ENCODE measurements at regions of chr5 and their contacts with region 1.

Region 1: DNA sequence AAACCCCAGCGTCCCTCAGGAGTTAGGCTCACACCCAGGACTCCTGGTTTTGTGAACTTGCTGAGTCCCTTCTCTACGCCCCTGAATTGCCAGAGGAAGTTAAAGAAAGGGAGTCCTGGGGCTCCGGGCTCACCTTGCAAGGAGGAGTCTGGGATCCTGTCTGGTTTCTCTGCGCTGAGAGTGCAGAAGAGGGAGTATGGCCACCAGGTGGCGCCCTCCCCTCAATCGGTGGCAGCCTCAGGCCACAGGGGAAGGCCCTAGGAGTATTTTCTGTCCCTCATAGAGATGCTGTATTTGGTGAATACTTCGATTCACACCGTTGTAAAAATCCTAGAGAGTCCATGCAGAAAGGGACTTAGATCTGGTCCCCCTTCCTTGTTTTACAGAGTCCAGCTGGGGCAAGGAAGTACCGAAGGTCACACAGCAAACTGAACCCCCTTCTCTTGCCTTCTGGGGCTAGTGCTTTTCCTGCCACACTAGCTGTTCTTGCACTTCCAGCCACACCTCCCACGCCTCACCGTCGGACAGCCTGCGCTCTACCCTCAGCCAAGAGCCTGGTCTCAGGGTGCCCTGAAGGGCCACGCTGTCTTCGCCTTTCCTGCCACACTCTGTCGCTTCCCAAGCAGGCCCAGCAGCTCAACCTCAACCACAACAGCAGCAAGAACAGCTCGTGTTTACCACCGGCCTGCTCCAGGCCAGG is 10.2 kb downstream of the HAND1 start:
- DNase-seq: peak; percentile 65 to 94
- ATAC-seq: peak; percentile 94 to 98
- H3K4me3 ChIP-seq: no peak overlapping the region
- H3K27ac ChIP-seq: no peak overlapping the region
- H3K4me1 ChIP-seq: peaks cover 29% of the 10 kb centered on the region
- CTCF ChIP-seq: peak; percentile 93
- EP300 ChIP-seq: no peak
- POLR2A ChIP-seq: no peak
- RAD21 ChIP-seq: peak; percentile 87 to 93

Region 2: DNA sequence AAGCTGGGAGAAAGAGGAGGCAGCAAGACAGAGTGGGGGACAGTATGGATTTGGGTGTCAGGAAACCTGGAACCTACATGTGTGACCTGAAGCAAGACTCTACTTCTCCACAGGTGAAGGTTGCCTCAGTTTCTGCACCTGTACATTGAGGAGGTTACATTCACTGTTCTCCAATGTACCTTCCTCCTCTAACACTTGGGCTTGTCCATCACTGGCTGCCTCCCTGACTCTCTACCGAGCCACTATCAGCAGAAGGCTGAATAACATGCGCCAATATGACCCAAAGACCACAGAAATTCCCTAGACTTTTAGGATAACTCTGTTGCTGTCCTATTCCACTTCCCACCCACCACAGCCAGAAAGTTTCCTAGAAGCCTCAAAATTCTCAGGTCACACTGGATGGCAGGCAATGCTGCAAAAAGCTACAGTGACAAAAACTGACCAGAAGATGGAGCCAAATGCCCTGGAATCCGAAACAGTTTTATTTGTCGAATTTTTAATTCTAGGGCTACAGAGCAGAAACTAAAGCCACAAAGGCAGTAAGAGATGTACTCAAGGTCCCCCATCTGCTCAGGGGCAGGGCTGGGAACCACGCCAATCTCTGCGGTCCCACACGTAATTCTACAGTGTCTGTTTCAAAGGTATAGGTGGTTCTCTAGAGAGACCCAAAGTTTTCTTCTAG is 493.5 kb before region 1 on chr5:
- CTCF ChIA-PET with region 1: interaction called, 33 read pairs
- POLR2A ChIA-PET with region 1: no interaction called
- DNase-seq: peak; percentile 35 to 56
- ATAC-seq: peak; percentile 65 to 87; a peak in 5 of 6 replicates
- H3K4me3 ChIP-seq: no peak overlapping the region
- H3K27ac ChIP-seq: no peak overlapping the region
- H3K4me1 ChIP-seq: no peaks in the 10 kb centered on the region
- CTCF ChIP-seq: peak; percentile 92
- EP300 ChIP-seq: no peak
- POLR2A ChIP-seq: no peak
- RAD21 ChIP-seq: peak; percentile 90 to 91

Region 3: DNA sequence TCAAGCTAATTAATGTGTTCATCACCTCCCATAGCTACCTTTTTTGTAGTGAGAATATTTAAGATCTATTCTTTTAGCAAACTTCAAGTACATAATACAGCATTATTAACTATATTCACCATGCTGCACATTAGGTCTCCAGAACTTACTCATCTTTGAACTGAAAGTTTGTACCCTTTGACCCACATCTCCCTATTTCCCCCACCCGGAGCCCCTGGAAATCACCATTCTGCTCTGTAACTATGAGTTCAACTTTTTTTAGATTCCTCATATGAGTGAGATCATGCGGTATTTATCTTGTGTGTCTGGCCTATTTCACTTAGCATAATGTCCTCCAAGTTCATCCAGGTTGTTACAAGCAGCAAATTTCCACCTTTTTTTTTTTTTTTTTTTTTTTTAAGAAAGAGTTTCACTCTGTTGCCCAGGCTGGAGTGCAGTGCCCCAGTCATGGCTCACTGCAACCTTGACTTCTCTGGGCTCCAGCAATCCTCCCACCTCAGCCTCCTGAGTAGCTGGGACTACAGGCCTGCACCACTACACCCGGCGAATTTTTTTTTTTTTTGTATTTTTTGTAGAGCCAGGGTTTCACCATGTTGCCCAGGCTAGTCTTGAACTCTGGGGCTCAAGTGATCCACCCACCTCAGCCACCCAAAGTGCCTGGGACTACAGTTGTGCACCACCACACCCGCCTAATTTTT is 122.4 kb before region 1 on chr5:
- CTCF ChIA-PET with region 1: no interaction called
- POLR2A ChIA-PET with region 1: no interaction called
- DNase-seq: no peak
- ATAC-seq: no peak
- H3K4me3 ChIP-seq: no peak overlapping the region
- H3K27ac ChIP-seq: no peak overlapping the region
- H3K4me1 ChIP-seq: peaks cover 11% of the 10 kb centered on the region
- CTCF ChIP-seq: no peak
- EP300 ChIP-seq: no peak
- POLR2A ChIP-seq: no peak
- RAD21 ChIP-seq: no peak

Region 4: DNA sequence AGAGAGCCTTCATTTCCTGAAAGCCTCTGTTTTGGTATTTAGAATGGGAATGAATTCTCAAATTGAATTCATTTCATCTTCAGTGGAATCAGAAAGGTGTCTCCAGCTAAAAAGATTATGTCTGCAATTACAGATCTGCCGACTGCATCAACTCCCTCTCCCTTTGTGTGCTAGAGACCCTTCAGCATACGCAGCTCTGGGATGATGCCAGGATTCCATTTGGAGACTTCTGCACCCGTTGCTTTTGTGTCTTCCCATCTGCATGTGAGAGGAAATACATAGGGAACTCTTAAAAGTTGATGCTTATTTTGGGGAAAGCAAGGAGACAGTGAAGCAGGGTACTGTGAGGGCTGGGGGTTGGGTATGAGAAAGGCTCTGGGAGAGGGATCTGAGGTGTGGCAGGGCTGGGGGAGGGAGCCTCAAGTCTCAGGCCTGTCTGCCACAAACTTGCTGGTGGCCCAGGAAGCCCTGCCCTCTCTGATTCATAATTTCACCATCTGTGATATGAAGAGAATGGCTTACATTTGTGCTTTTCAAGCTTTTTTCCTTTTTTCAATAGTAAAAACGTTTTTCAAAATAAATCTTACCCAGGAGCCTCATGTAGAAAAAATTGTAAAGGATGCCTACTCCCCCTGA is 111.7 kb before region 1 on chr5:
- CTCF ChIA-PET with region 1: no interaction called
- POLR2A ChIA-PET with region 1: no interaction called
- DNase-seq: peak in 1 of 2 experiments; percentile 23
- ATAC-seq: peak; percentile 55 to 63
- H3K4me3 ChIP-seq: no peak overlapping the region
- H3K27ac ChIP-seq: peak overlapping the region; percentile 67 to 83
- H3K4me1 ChIP-seq: peaks cover 92% of the 10 kb centered on the region
- CTCF ChIP-seq: no peak
- EP300 ChIP-seq: no peak
- POLR2A ChIP-seq: no peak
- RAD21 ChIP-seq: no peak

Region 5: GRCh38 chr5:154451957-154452356 is 15.8 kb before region 1 on chr5:
- CTCF ChIA-PET with region 1: interaction called, 24 read pairs
- POLR2A ChIA-PET with region 1: no interaction called
- DNase-seq: no peak
- ATAC-seq: no peak
- H3K4me3 ChIP-seq: no peak overlapping the region
- H3K27ac ChIP-seq: no peak overlapping the region
- H3K4me1 ChIP-seq: peaks cover 22% of the 10 kb centered on the region
- CTCF ChIP-seq: no peak
- EP300 ChIP-seq: no peak
- POLR2A ChIP-seq: no peak
- RAD21 ChIP-seq: no peak

Region 6: GRCh38 chr5:154520861-154521453 is 53.2 kb after region 1 on chr5:
- CTCF ChIA-PET with region 1: interaction called, 79 read pairs
- POLR2A ChIA-PET with region 1: no interaction called
- DNase-seq: peak; percentile 43 to 79
- ATAC-seq: peak; percentile 23 to 68; a peak in 3 of 6 replicates
- H3K4me3 ChIP-seq: no peak overlapping the region
- H3K27ac ChIP-seq: no peak overlapping the region
- H3K4me1 ChIP-seq: peaks cover 39% of the 10 kb centered on the region
- CTCF ChIP-seq: peak; percentile 80
- EP300 ChIP-seq: no peak
- POLR2A ChIP-seq: no peak
- RAD21 ChIP-seq: peak; percentile 58 to 63; a peak in 4 of 5 replicates

Region 7: DNA sequence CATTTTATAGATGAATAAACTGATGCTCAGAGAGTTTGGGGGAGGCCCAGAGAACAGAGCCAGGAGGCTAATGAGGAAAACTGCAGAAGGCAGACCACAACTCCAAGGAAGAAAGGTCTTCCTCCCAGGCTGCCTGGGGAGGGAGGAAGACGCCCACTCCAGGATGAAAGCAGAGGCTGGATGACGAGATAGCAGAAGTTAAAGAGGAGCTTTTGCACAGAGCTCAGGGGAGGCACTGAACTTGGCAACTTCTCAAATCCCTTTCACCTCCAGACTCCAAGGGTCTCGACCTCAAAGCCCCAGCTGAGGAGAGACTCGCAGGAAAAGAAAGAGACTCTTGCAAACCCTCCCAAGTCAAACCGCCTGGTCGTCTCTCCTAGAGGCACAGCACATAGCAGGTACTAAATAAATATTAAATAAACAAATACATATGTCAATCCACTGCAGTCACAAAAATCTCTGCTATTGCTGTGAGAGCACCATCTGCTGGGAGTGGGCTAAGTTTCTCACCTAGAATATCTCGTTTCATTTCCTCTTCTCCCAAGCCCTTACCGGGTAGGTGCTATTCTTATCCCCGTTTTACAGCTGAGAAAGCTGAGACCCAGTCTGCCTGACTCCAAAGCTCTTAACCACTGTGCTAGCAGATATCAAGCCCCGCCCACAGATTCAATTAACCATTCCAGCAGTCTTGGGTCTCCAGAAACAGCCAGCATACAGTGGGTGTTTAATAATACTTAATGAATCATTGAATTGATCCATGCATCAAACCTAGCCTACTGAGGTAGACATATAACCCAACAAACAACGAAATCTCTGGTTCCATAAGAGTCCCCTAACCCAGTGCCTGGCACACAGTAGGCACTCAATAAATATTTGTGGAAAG is 108.0 kb after region 1 on chr5:
- CTCF ChIA-PET with region 1: interaction called, 13 read pairs
- POLR2A ChIA-PET with region 1: no interaction called
- DNase-seq: peak in 1 of 2 experiments; percentile 38
- ATAC-seq: peak; percentile 72 to 74; a peak in 5 of 6 replicates
- H3K4me3 ChIP-seq: no peak overlapping the region
- H3K27ac ChIP-seq: no peak overlapping the region
- H3K4me1 ChIP-seq: 0 out of 3 replicates have a peak, but pooled peaks cover 3% of the 10 kb centered on the region
- CTCF ChIP-seq: peak; percentile 49
- EP300 ChIP-seq: no peak
- POLR2A ChIP-seq: no peak
- RAD21 ChIP-seq: peak; percentile 39 to 44

Region 8: GRCh38 chr5:154610321-154611154 is 142.7 kb after region 1 on chr5:
- CTCF ChIA-PET with region 1: interaction called, 304 read pairs
- POLR2A ChIA-PET with region 1: interaction called, 3 read pairs
- DNase-seq: peak; percentile 84 to 88
- ATAC-seq: peak; percentile 93 to 98
- H3K4me3 ChIP-seq: peak overlapping the region; percentile 33
- H3K27ac ChIP-seq: peak overlapping the region in 1 of 2 experiments; percentile 69; a peak in 3 of 6 replicates
- H3K4me1 ChIP-seq: peaks cover 4% of the 10 kb centered on the region; the same call in 1 of the 3 replicates
- CTCF ChIP-seq: peak; percentile 94
- EP300 ChIP-seq: no peak
- POLR2A ChIP-seq: no peak
- RAD21 ChIP-seq: peak; percentile 99